Ovary (tissue), 10 donors: ENCODE measurements at regions of chr2 and their contacts with region 1.

Region 1: DNA sequence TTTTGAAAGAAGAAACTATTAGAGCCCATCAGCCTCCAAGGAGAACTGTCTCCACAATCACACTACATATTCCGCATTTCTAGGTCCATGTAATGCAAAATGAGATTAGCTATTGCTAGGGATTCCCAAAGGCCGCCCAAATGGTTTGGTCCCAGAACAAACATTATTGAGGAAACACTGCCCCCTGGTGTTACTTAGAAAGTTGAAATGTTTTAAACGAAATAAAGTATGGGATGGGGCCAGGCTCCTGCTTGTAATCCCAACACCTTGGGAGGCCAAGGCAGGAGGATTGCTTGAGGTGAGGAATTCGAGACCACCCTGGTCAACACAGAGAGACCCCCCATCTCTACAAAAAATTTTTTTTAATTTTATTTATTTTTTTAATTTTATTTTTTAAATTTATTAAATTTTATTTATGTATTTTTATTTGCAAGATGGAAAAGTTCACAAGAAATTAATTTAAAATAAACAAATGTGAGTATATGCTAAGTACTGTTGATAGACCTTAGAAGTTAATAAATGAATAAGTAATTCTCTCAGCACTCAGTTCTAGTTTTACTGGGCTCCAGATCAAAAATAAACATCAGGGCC is 5.5 kb downstream of the NHEJ1 start:
- DNase-seq: peak in 1 of 5 donors; percentile 42
- H3K4me3 ChIP-seq: no peak overlapping the region
- H3K27ac ChIP-seq: no peak overlapping the region
- H3K4me1 ChIP-seq: no peaks in the 10 kb centered on the region
- H3K27me3 ChIP-seq: no peaks in the 10 kb centered on the region
- CTCF ChIP-seq: peak; percentile 49 to 77 (median 56)
- EP300 ChIP-seq: no peak
- POLR2A ChIP-seq: no peak

Region 2: GRCh38 chr2:218995972-218996711 is 159.0 kb before region 1 on chr2:
- intact Hi-C with region 1: loop called in 1 of 4 experiments (anchors 10 kb)
- DNase-seq: peak; percentile 69 to 88 (median 85)
- H3K4me3 ChIP-seq: peak overlapping the region; percentile 27
- H3K27ac ChIP-seq: no peak overlapping the region
- H3K4me1 ChIP-seq: peaks cover 2% of the 10 kb centered on the region
- H3K27me3 ChIP-seq: peaks cover 7% of the 10 kb centered on the region
- CTCF ChIP-seq: peak; percentile 74 to 88 (median 86)
- EP300 ChIP-seq: no peak
- POLR2A ChIP-seq: no peak